K562 (cell line): ENCODE measurements at regions of chr15 and their contacts with region 1.

Region 1: GRCh38 chr15:80977627-80978036 is 12.0 kb downstream of the MESD start:
- DNase-seq: peak; percentile 77 to 87 (median 80)
- ATAC-seq: peak; percentile 99
- H3K4me3 ChIP-seq: no peak overlapping the region
- H3K27ac ChIP-seq: no peak overlapping the region
- H3K4me1 ChIP-seq: peaks cover 0 to 3% of the 10 kb centered on the region in 2 experiments; a peak in 2 of 5 replicates
- H3K27me3 ChIP-seq: no peaks in the 10 kb centered on the region
- CTCF ChIP-seq: peak; percentile 92 to 95 (median 92)
- EP300 ChIP-seq: no peak
- POLR2A ChIP-seq: no peak
- RAD21 ChIP-seq: peak; percentile 88 to 94

Region 2: GRCh38 chr15:80989518-80990478 is 12.2 kb after region 1 on chr15 and contains the start of gene MESD:
- CTCF ChIA-PET with region 1: interaction called, 3 read pairs
- POLR2A ChIA-PET with region 1: interaction called, 4 read pairs
- in situ Hi-C with region 1: no loop called
- intact Hi-C with region 1: loop called (anchors 1 kb)
- DNase-seq: peak; percentile 97 to 99 (median 98)
- ATAC-seq: peak; percentile 97
- H3K4me3 ChIP-seq: peak within 1 kb of the TSS; percentile 65
- H3K27ac ChIP-seq: peak within 1 kb of the TSS; percentile 75
- H3K4me1 ChIP-seq: peaks cover 10 to 42% of the 10 kb centered on the region in 2 experiments
- H3K27me3 ChIP-seq: no peaks in the 10 kb centered on the region
- CTCF ChIP-seq: no peak
- EP300 ChIP-seq: peak; percentile 25; the same call in 1 of the 2 replicates
- POLR2A ChIP-seq: peak; percentile 94
- RAD21 ChIP-seq: no peak
- polyA plus RNA-seq, gene MESD: 11.3 to 17.0 TPM

Region 3: DNA sequence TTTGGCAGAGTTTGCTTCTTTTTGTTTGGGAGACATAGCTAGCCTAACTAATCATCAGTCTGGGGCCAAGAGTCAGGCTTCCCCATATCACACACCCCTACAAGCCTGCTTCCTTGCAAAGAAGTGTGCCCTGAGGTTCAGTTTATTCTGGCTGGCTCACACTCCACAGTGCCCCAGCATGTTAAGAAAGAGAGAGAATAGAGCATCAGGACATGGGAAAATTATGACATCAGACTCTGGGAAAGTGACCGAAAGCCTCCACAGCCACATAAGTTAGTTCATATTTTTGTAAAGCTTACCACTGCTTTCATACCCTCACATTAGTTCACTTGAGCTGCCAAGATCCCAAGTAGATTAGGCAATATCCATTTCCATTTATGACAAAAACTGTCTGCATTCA is 93.5 kb after region 1 on chr15:
- CTCF ChIA-PET with region 1: no interaction called
- POLR2A ChIA-PET with region 1: no interaction called
- in situ Hi-C with region 1: no loop called
- intact Hi-C with region 1: no loop called
- DNase-seq: no peak
- ATAC-seq: no peak
- H3K4me3 ChIP-seq: no peak overlapping the region
- H3K27ac ChIP-seq: no peak overlapping the region
- H3K4me1 ChIP-seq: peaks cover 0 to 15% of the 10 kb centered on the region in 2 experiments; a peak in 4 of 5 replicates
- H3K27me3 ChIP-seq: no peaks in the 10 kb centered on the region
- CTCF ChIP-seq: no peak
- EP300 ChIP-seq: no peak
- POLR2A ChIP-seq: no peak
- RAD21 ChIP-seq: no peak

Region 4: GRCh38 chr15:81256916-81257315 is 279.3 kb after region 1 on chr15:
- CTCF ChIA-PET with region 1: interaction called, 17 read pairs
- POLR2A ChIA-PET with region 1: no interaction called
- in situ Hi-C with region 1: no loop called
- intact Hi-C with region 1: no loop called
- DNase-seq: peak in 2 of 4 experiments; percentile 27 to 30
- ATAC-seq: peak; percentile 78
- H3K4me3 ChIP-seq: no peak overlapping the region
- H3K27ac ChIP-seq: no peak overlapping the region
- H3K4me1 ChIP-seq: peaks cover 0 to 3% of the 10 kb centered on the region in 2 experiments; a peak in 2 of 5 replicates
- H3K27me3 ChIP-seq: no peaks in the 10 kb centered on the region
- CTCF ChIP-seq: peak; percentile 40 to 70 (median 41); a peak in 4 of 6 replicates
- EP300 ChIP-seq: no peak
- POLR2A ChIP-seq: no peak
- RAD21 ChIP-seq: peak; percentile 75